ENCODE measurements at regions of chr1 and their contacts with region 1.

Region 1: DNA sequence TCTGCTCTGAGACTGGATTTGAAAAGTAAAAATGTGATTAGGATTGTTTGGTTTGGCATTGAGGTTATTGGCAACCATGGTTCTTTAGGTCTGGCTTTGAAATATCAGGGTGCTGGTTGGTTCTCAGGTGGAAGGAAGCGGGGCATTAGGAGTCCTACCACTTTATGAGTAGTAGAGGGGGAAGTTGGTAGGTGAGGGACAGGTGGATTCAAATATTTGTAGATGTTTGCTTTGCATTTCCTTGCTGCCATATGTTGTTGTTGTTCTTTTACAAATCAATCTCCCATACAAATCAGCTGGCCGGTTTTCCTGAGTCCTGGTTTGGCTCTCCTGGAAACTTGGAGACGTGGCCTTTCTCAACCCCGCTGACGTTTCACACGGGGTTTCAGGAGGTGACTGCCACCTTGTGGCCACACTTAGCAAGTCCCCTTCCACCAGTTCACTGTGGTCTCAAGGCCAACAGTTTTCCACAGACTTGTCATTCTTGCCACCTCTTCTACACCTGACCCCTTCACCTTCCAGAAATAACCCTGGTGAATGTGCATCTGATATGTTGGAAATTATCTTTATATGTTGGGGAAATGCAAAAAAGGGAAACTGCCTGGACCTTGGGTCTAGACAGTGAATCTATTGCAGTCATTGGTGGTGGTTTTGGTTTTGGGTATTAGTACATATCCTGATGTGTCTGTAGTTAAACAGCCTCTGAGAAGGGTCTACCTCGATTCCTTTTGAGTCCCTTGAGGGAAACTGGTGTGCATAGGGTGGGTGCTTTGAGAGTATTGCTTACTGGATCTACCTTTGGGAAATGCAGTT is 127.0 kb upstream of the KIAA0040 start:
- DNase-seq: peak; percentile 82
- ATAC-seq: peak; percentile 89
- H3K4me3 Mint-ChIP-seq: no peak overlapping the region
- H3K27ac Mint-ChIP-seq: no peak overlapping the region
- H3K4me1 Mint-ChIP-seq: peaks cover 12% of the 10 kb centered on the region
- H3K27me3 Mint-ChIP-seq: peaks cover 2% of the 10 kb centered on the region

Region 2: GRCh38 chr1:175033953-175034352 is 285.7 kb before region 1 on chr1:
- CTCF ChIA-PET with region 1: interaction called, 3 read pairs
- POLR2A ChIA-PET with region 1: no interaction called
- intact Hi-C with region 1: loop called (anchors 1 to 2 kb)
- DNase-seq: no peak
- ATAC-seq: no peak
- H3K4me3 Mint-ChIP-seq: no peak overlapping the region
- H3K27ac Mint-ChIP-seq: no peak overlapping the region
- H3K4me1 Mint-ChIP-seq: peaks cover 9% of the 10 kb centered on the region
- H3K27me3 Mint-ChIP-seq: no peaks in the 10 kb centered on the region

Region 3: DNA sequence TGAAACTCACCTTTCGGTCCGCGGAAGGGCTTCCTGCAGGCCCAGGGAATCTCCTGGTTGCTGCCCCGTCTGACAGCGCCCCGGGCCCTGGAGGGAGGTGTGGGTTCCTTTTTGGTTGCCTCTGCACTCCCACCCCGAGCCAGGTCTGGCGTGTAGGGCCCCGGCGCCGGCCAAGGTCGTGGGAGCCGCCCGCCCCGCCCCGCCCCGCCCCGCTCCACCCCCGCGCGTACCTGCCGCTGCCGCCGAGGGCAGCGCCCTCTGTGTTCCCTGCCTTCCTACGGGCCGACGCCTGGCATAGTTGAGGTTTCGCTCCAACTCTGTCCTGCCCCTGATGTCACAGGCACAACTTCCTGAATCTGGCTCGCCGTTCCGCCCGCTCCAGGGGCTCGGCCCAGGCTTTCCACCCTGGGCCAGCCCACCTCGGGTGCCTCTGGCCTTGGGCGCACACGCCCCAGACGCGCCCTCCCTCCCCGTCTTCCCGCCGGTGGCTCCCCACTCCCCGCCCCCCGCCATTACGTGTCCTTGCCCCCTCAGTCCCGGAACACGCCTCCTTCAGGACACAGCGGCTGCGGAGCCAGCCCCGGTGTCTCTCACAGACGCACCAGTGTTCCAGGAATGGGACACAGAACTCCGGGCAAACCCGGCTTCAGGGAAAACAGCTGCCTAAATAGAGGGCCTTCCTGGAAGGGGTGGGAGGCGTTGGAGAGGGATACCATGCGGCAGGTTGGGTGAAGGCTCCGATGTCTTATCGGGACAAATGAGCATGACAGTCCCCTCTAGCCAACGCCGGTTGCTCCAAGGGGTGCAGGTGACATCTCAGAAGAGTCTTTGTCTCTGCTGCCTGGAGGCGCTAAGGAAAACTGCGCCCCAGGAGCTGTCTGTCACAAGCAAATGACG is 126.7 kb before region 1 on chr1 and contains the start of gene KIAA0040:
- CTCF ChIA-PET with region 1: interaction called, 31 read pairs
- POLR2A ChIA-PET with region 1: interaction called, 3 read pairs
- intact Hi-C with region 1: no loop called
- DNase-seq: peak; percentile 81
- ATAC-seq: peak; percentile 65
- H3K4me3 Mint-ChIP-seq: peak within 1 kb of the TSS; percentile 99
- H3K27ac Mint-ChIP-seq: peak within 1 kb of the TSS; percentile 93
- H3K4me1 Mint-ChIP-seq: peaks cover 47% of the 10 kb centered on the region
- H3K27me3 Mint-ChIP-seq: no peaks in the 10 kb centered on the region
- total RNA-seq, gene KIAA0040: 25.4 to 26.1 TPM

Region 4: DNA sequence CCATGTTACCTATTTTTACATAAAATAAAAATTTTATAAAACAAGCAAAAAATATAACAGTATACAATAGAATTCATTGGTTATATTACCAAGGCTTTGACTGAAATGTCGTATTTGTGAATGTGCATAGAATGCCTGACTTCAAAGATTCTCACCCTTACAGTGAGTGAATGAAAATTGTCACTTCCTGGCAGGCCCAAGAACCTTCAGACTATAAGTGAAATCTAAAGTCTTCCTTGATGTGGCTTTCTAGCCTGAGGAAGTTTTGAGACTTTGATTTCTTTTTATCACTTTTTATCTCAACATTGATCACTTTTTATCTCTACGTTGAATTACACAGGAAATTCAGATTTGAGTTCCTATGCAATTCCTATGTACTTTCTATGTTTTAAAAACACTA is 22.3 kb before region 1 on chr1:
- CTCF ChIA-PET with region 1: interaction called, 31 read pairs
- POLR2A ChIA-PET with region 1: no interaction called
- intact Hi-C with region 1: no loop called
- DNase-seq: no peak
- ATAC-seq: peak; percentile 42
- H3K4me3 Mint-ChIP-seq: no peak overlapping the region
- H3K27ac Mint-ChIP-seq: no peak overlapping the region
- H3K4me1 Mint-ChIP-seq: peaks cover 28% of the 10 kb centered on the region
- H3K27me3 Mint-ChIP-seq: peaks cover 4% of the 10 kb centered on the region

Region 5: DNA sequence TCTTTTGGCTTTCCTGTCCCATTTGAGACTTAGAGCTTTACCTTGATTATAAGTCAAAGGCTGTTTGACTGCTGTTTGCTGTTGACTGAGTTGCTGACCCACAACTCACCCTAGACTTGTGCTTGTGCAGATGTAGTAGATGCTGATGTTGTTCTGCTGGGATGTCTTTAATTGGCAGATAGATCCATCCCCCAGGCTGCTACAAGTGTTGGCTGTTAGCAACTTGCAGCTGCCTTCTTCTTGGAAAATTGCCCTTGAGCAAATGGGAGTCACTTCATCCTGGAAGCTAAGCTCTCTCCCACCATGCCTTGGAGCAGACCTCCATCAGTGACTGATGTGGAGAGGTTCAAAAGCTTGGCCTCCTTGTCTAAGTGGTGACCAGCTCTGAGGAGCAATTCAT is 12.3 kb after region 1 on chr1:
- CTCF ChIA-PET with region 1: interaction called, 18 read pairs
- POLR2A ChIA-PET with region 1: no interaction called
- intact Hi-C with region 1: no loop called
- DNase-seq: no peak
- ATAC-seq: no peak
- H3K4me3 Mint-ChIP-seq: no peak overlapping the region
- H3K27ac Mint-ChIP-seq: no peak overlapping the region
- H3K4me1 Mint-ChIP-seq: no peaks in the 10 kb centered on the region
- H3K27me3 Mint-ChIP-seq: no peaks in the 10 kb centered on the region